ENCODE measurements at regions of chr10 and their contacts with region 1.

Region 1: GRCh38 chr10:32346134-32346550 is 816 bp downstream of the EPC1 start:
- DNase-seq: peak; percentile 82
- ATAC-seq: peak; percentile 87
- H3K4me3 ChIP-seq: peak overlapping the region; percentile 84
- H3K27ac ChIP-seq: peak overlapping the region; percentile 100
- H3K4me1 ChIP-seq: peaks cover 4% of the 10 kb centered on the region; the same call in 1 of the 2 replicates
- H3K27me3 ChIP-seq: no peaks in the 10 kb centered on the region
- CTCF ChIP-seq: peak; percentile 92 to 99 (median 93); a peak in 5 of 6 replicates
- EP300 ChIP-seq: 0 out of 4 replicates have a peak, but pooled peaks of 1 of the 2 experiments have one; percentile 29
- POLR2A ChIP-seq: no peak; the same call in 1 of the 2 replicates
- RAD21 ChIP-seq: peak; percentile 87

Region 2: DNA sequence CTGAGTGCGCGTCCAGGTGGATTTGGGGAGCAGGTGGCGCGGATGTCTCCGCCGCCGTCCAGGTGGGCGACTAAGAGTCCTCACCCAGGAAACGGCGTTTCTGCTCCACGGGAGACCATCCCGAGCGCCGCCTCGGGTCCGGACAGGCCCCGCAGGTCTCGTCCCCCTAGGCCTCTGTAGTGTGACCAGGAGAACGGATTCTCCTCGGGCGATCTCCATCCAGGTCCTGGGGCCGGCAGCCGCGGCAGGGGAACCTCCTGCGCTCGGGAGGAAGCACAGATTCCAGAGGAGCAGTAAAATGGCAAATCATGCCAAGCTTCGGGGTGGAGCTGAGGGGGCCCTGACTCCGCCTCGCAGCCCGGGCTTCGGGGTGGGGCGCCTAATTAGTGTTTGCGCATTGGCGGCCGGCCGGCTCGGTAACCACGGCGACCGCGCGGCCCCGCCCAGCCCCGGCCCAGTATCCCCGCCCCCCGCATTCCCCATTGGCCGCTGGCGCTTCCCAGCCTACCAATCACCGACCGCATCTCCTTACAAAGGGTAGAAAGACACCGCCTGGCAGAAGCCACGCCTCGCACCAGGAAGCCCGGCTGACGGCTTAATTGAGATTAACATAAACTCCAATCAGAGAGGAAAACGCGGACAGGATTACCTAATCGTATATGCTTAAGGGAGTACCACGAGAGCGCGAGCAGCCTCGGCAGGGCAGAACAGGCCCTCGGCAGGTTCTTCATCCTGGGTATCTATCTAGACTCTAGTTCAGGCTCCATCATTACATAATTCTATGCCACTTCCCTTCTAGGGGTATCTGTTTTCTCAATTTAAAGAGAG is 586.1 kb before region 1 on chr10:
- CTCF ChIA-PET with region 1: no interaction called
- POLR2A ChIA-PET with region 1: no interaction called
- RAD21 ChIA-PET with region 1: no interaction called
- SMC1A ChIA-PET with region 1: no interaction called
- in situ Hi-C with region 1: no loop called
- intact Hi-C with region 1: no loop called
- DNase-seq: peak; percentile 77
- ATAC-seq: peak; percentile 97
- H3K4me3 ChIP-seq: peak overlapping the region; percentile 90
- H3K27ac ChIP-seq: peak overlapping the region; percentile 79
- H3K4me1 ChIP-seq: peaks cover 3% of the 10 kb centered on the region; the same call in 1 of the 2 replicates
- H3K27me3 ChIP-seq: no peaks in the 10 kb centered on the region
- CTCF ChIP-seq: no peak
- EP300 ChIP-seq: no peak
- POLR2A ChIP-seq: peak; percentile 84
- RAD21 ChIP-seq: no peak

Region 3: DNA sequence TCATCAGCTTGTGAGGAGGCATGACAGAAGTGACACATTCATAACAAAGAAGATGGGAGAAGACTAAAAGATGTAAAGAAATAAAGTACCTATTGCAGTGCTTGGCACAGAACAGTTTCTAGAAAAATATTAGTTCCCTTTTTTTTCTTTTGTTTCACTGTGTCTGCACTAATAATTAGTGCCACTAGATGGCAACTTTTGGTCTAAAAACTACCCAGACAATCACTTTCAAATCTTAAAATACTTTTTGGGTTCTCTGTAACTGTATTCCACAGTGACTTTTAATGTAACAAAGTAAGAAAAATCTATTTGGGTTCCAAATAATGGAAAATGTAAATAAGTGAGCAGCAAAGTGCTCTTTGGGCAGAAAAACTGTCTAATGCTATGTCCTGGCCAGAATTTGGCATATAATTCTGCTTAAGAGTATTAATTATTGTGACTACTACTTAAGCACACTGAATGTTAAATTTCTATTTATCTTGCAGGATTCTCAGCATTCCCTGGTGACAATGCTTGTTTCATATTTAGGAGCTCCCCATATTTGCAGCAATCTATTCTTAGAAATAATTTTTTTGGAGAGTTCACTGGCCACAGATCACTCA is 155.2 kb before region 1 on chr10:
- CTCF ChIA-PET with region 1: interaction called, 3 read pairs
- POLR2A ChIA-PET with region 1: no interaction called
- RAD21 ChIA-PET with region 1: no interaction called
- SMC1A ChIA-PET with region 1: interaction called, 4 read pairs
- in situ Hi-C with region 1: no loop called
- intact Hi-C with region 1: loop called (anchors 1 kb)
- DNase-seq: no peak
- ATAC-seq: peak; percentile 87
- H3K4me3 ChIP-seq: no peak overlapping the region
- H3K27ac ChIP-seq: no peak overlapping the region
- H3K4me1 ChIP-seq: no peaks in the 10 kb centered on the region
- H3K27me3 ChIP-seq: no peaks in the 10 kb centered on the region
- CTCF ChIP-seq: peak; percentile 54 to 73 (median 69)
- EP300 ChIP-seq: no peak
- POLR2A ChIP-seq: no peak
- RAD21 ChIP-seq: peak; percentile 77

Region 4: GRCh38 chr10:32318476-32318896 is 27.7 kb before region 1 on chr10:
- CTCF ChIA-PET with region 1: interaction called, 20 read pairs
- POLR2A ChIA-PET with region 1: interaction called, 3 read pairs
- RAD21 ChIA-PET with region 1: interaction called, 13 read pairs
- SMC1A ChIA-PET with region 1: interaction called, 205 read pairs
- in situ Hi-C with region 1: no loop called
- intact Hi-C with region 1: loop called (anchors 1 kb)
- DNase-seq: peak; percentile 75
- ATAC-seq: peak; percentile 79
- H3K4me3 ChIP-seq: peak overlapping the region; percentile 6; the same call in 1 of the 2 replicates
- H3K27ac ChIP-seq: peak overlapping the region; percentile 98
- H3K4me1 ChIP-seq: peaks cover 58% of the 10 kb centered on the region
- H3K27me3 ChIP-seq: no peaks in the 10 kb centered on the region
- CTCF ChIP-seq: no peak
- EP300 ChIP-seq: peak; percentile 45 to 89; a peak in 2 of 4 replicates
- POLR2A ChIP-seq: no peak; the same call in 1 of the 2 replicates
- RAD21 ChIP-seq: no peak

Region 5: GRCh38 chr10:32357056-32357735 is 11.1 kb after region 1 on chr10:
- CTCF ChIA-PET with region 1: interaction called, 11 read pairs
- POLR2A ChIA-PET with region 1: interaction called, 3 read pairs
- RAD21 ChIA-PET with region 1: interaction called, 3 read pairs
- SMC1A ChIA-PET with region 1: interaction called, 5 read pairs
- in situ Hi-C with region 1: no loop called
- intact Hi-C with region 1: no loop called
- DNase-seq: no peak
- ATAC-seq: no peak
- H3K4me3 ChIP-seq: no peak overlapping the region
- H3K27ac ChIP-seq: no peak overlapping the region
- H3K4me1 ChIP-seq: peaks cover 15% of the 10 kb centered on the region
- H3K27me3 ChIP-seq: no peaks in the 10 kb centered on the region
- CTCF ChIP-seq: no peak
- EP300 ChIP-seq: no peak
- POLR2A ChIP-seq: no peak
- RAD21 ChIP-seq: no peak

Region 6: DNA sequence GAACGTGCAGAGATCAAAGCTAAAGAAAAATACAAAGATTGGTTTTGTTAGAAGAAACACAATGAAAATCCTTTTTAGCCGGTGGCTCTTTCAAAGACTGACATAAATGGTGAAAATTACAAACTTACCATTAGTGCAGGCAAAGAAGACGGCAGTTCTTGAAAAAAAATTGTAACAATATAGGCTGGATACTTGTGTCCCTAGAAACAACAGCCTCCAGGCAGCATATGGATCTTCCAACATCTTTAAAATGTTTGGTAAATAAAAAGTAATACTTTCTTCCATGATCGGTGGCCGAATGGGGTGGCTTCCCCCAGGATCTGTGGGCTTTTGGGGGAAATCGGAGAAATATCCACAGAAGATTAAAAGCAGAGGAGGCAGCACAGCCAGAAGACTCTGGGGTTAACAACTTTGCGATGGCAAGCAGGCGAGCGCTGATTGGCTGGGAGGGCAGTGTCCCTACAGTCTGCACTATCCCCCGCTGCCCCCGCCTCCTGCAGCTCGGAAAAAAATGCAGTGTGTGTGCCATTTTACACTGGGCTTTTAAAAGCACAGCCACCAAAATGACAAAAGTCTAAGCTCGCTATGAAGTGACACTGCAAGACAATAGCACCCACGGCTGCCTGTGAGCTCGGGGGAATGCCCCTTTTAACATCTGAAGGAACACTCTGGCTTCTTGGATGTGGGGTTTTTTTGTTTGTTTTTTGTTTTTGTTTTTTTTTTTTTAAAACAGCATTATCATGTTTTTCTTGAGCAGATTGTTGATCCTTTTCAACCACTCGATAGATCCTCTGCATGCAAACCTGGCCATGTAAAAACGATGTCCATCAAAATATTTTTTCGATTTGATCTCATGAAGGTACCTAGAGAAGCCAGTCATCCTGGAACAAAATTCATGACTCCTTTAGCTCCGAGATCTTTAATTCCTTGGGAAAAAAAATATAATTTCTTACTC is 32.5 kb after region 1 on chr10:
- CTCF ChIA-PET with region 1: interaction called, 19 read pairs
- POLR2A ChIA-PET with region 1: interaction called, 9 read pairs
- RAD21 ChIA-PET with region 1: interaction called, 14 read pairs
- SMC1A ChIA-PET with region 1: interaction called, 7 read pairs
- in situ Hi-C with region 1: no loop called
- intact Hi-C with region 1: no loop called
- DNase-seq: peak; percentile 72
- ATAC-seq: peak; percentile 96
- H3K4me3 ChIP-seq: peak overlapping the region; percentile 77
- H3K27ac ChIP-seq: peak overlapping the region; percentile 75
- H3K4me1 ChIP-seq: no peaks in the 10 kb centered on the region
- H3K27me3 ChIP-seq: no peaks in the 10 kb centered on the region
- CTCF ChIP-seq: no peak
- EP300 ChIP-seq: no peak
- POLR2A ChIP-seq: peak; percentile 74
- RAD21 ChIP-seq: no peak